Dorsolateral prefrontal cortex (tissue), 120 donors: ENCODE measurements at regions of chr9 and their contacts with region 1.

Region 1: GRCh38 chr9:136339173-136339957 is 12.0 kb downstream of the GPSM1 start:
- DNase-seq: peak in 6 of 10 donors; percentile 52 to 81 (median 69)
- H3K4me3 ChIP-seq: no peak overlapping the region
- H3K27ac ChIP-seq: peak overlapping the region in 18 of 59 donors; percentile 2 to 76 (median 42)
- H3K27me3 ChIP-seq: no peaks in the 10 kb centered on the region
- CTCF ChIP-seq: peak; percentile 21 to 92 (median 79)

Region 2: DNA sequence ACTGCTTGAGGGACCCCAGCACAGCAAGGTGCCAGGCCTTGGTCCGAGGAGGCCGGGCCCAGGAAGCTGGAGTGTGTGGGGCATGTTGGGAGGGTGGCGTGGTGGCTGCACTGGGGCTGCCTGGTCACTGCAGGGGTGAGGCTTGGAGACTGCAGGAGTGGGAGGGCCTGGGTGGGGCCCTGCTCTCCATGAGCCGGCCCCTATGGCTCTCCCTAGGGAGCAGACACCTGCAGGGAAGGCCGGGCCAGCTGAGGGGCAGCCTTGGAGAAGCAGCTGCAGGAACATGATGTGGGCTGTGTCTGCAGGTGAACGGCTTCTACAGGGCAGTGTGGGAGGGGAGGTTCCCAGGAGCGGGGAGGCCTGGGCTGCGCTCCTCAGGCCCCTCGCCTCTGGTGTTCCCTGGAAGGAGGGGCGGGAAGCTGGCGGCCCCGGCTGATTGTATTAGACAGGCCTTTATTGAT is 179.0 kb before region 1 on chr9:
- intact Hi-C with region 1: no loop called
- DNase-seq: no peak
- H3K4me3 ChIP-seq: no peak overlapping the region
- H3K27ac ChIP-seq: no peak overlapping the region
- H3K27me3 ChIP-seq: peaks cover 0 to 13% (median 0%) of the 10 kb centered on the region in 45 donors
- CTCF ChIP-seq: no peak

Region 3: DNA sequence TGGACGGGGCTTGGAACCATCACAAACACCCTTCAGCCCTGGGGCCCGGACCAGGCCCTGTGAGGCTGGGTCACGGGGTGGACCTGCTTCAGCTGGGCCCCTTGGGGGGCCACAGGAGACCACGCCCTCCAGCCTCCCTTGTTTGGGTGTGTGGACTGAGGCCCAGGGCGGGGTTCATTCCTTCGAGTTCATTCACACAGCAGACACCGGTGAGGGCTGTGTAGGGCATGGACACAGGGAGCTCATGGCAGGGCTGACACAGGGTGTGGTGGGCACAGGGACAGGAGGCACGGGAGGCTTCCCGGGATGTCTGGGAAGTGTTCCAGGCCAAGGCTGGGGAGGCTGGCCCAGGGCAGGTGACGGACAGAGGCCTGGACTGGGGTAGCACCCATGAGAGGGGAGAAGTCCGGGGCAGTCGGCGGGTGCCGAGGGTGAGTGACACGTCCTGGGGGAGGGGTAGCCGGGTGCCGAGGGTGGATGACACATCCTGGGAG is 15.3 kb after region 1 on chr9:
- intact Hi-C with region 1: no loop called
- DNase-seq: no peak
- H3K4me3 ChIP-seq: no peak overlapping the region
- H3K27ac ChIP-seq: peak overlapping the region in 6 of 59 donors; percentile 0 to 33 (median 24)
- H3K27me3 ChIP-seq: no peaks in the 10 kb centered on the region
- CTCF ChIP-seq: no peak

Region 4: DNA sequence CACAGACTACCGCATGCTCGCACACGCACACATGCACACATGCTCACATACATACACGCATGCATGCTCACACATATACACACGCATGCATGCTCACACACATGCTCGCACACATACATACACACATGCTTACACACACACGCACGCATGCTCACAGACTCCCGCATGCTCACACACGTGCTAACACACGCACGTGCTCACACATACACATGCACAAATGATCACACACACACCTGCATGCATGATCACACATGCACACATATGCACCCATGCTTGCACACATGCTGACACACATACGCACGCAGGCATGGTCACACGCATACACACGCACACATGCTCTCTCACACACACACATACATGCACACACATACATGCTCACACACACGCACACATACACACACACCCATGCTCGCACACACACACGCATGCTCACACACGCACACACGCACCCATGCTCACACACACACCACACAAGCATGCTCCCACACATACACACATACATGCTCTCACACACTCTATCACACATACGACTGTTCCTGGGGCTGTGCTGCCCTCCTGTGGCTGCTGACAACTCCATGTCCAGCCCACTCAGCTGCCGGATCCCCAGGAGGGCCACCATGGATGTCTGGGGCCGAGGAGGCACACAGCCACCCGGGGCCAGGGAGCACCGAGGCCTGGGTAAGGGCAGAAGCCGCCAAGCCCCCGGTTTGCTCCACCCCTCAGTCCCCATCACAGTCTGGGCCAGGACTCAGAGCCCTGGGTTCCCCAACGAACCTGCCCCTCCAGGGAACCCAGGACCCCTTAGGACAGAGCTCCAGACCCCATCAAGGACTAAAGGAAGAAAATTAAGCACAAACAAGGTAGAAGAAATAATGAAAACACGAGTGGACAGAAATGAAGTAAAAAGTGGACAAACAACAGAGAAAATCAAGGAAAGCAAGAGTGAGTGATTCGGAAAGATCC is 292.0 kb after region 1 on chr9:
- intact Hi-C with region 1: loop called in 1 of 2 experiments (anchors 10 kb)
- DNase-seq: peak in 9 of 10 donors; percentile 47 to 81 (median 68)
- H3K4me3 ChIP-seq: no peak overlapping the region
- H3K27ac ChIP-seq: peak overlapping the region in 13 of 59 donors; percentile 6 to 65 (median 41)
- H3K27me3 ChIP-seq: no peaks in the 10 kb centered on the region
- CTCF ChIP-seq: peak; percentile 38 to 89 (median 77)